ENCODE measurements at regions of chr5 and their contacts with region 1.

Region 1: DNA sequence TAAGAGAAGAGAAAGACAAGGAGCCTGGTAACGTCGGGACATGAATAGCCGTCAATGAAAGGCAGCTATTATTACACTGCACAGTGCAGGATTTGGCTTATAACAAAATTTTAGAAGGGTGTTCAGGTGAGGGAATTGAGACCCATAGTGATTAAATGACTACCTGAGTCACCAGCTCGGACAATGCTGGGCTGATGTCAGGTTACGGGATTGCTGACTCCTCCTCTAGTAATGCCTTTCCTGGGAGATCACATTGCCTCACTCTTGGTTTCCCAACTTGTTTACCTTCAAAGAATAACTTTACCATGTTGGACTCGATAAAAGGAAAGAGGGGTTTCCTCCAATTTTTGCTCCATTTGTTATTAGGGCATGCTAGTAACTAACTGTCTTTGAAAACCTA is 132.6 kb downstream of the GHR start:
- DNase-seq: peak; percentile 47 to 75 (median 59)
- ATAC-seq: peak; percentile 52 to 70 (median 62)
- H3K4me3 ChIP-seq: no peak overlapping the region
- H3K27ac ChIP-seq: peak overlapping the region; percentile 70 to 83 (median 78)
- H3K4me1 ChIP-seq: peaks cover 0 to 73% (median 19%) of the 10 kb centered on the region in 4 donors
- H3K27me3 ChIP-seq: no peaks in the 10 kb centered on the region
- CTCF ChIP-seq: no peak
- POLR2A ChIP-seq: peak; percentile 52

Region 2: GRCh38 chr5:42390115-42390514 is 165.7 kb before region 1 on chr5:
- intact Hi-C with region 1: no loop called
- DNase-seq: no peak
- ATAC-seq: no peak
- H3K4me3 ChIP-seq: no peak overlapping the region
- H3K27ac ChIP-seq: no peak overlapping the region
- H3K4me1 ChIP-seq: no peaks in the 10 kb centered on the region
- H3K27me3 ChIP-seq: no peaks in the 10 kb centered on the region
- CTCF ChIP-seq: no peak
- POLR2A ChIP-seq: no peak

Region 3: DNA sequence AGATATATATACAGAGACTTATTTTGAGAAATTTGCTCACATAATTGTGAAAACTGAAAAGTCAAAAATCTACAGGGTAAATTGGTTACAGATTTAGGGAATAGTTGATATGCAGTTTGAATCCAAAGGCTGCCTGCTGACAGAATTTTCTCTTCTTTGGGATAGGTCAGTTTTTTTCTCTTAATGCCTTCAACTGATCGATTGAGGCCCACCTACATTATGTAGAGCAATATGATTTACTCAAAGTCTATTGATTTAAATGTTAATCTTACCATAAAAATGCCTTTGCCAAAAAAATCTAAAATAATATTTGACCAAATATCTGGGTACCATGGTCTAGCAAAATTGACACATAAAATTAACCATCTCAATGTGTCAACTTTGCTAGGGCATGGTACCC is 136.5 kb before region 1 on chr5:
- intact Hi-C with region 1: no loop called
- DNase-seq: no peak
- ATAC-seq: no peak
- H3K4me3 ChIP-seq: no peak overlapping the region
- H3K27ac ChIP-seq: no peak overlapping the region
- H3K4me1 ChIP-seq: peaks cover 0 to 10% (median 4%) of the 10 kb centered on the region in 4 donors
- H3K27me3 ChIP-seq: no peaks in the 10 kb centered on the region
- CTCF ChIP-seq: no peak
- POLR2A ChIP-seq: no peak

Region 4: GRCh38 chr5:42514754-42515153 is 41.0 kb before region 1 on chr5:
- intact Hi-C with region 1: loop called in 1 of 2 experiments (anchors 5 kb)
- DNase-seq: no peak
- ATAC-seq: peak; percentile 50 to 57 (median 55)
- H3K4me3 ChIP-seq: no peak overlapping the region
- H3K27ac ChIP-seq: peak overlapping the region; percentile 41 to 88 (median 82)
- H3K4me1 ChIP-seq: peaks cover 0 to 43% (median 0%) of the 10 kb centered on the region in 4 donors
- H3K27me3 ChIP-seq: no peaks in the 10 kb centered on the region
- CTCF ChIP-seq: peak; percentile 10 to 46 (median 40)
- POLR2A ChIP-seq: no peak